ENCODE measurements at regions of chr16 and their contacts with region 1.

Region 1: DNA sequence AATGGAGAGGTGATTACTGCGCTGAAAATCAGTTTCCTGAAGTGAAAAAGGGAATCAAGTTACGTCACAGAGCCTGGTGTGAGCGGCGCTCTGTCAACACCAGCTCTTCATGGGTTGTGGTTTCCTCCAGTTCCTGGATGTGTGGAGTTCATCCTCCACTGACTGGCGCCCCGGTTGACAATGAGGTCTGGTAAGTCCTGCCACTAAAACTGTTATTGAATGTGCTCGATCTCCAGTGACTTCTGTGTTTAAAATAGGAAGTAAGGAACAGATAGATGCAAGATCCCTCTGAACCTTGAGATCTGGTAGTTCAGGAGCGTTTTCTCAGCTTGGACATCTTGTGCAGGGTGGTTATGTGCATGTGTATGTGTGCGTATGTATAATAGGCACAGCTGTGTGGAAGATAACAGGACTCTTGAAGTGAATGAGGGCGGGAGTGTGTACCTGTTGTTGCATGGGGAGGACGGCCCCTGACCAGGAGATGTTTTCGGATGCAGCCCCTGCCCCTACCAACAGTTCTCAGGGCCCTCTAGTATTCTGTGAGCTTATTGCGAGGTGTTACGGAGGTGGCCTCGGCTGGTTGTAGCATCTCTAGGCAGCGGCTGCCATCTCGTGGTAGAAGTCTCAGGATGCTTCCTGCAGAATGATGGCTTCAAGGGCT is 22.0 kb upstream of the GOT2 start:
- DNase-seq: peak; percentile 44 to 82 (median 76)
- ATAC-seq: peak; percentile 94
- H3K4me3 ChIP-seq: peak overlapping the region; percentile 28
- H3K4me3 Mint-ChIP-seq: peak overlapping the region; percentile 56 to 79 (median 70)
- H3K27ac ChIP-seq: peak overlapping the region; percentile 19
- H3K27ac Mint-ChIP-seq: peak overlapping the region; percentile 32 to 94 (median 87)
- H3K4me1 ChIP-seq: peaks cover 0 to 7% of the 10 kb centered on the region in 2 donors
- H3K4me1 Mint-ChIP-seq: peaks cover 7 to 10% (median 9%) of the 10 kb centered on the region in 7 donors
- H3K27me3 ChIP-seq: no peaks in the 10 kb centered on the region
- H3K27me3 Mint-ChIP-seq: peaks cover 0 to 8% (median 0%) of the 10 kb centered on the region in 5 donors

Region 2: GRCh38 chr16:57899771-57900661 is 856.1 kb before region 1 on chr16:
- CTCF ChIA-PET with region 1: no interaction called
- POLR2A ChIA-PET with region 1: no interaction called
- intact Hi-C with region 1: loop called in 1 of 2 experiments (anchors 1 kb)
- DNase-seq: peak; percentile 55 to 81 (median 71)
- ATAC-seq: peak; percentile 86
- H3K4me3 ChIP-seq: no peak overlapping the region
- H3K4me3 Mint-ChIP-seq: no peak overlapping the region
- H3K27ac ChIP-seq: no peak overlapping the region
- H3K27ac Mint-ChIP-seq: peak overlapping the region in 1 of 9 donors; percentile 1
- H3K4me1 ChIP-seq: no peaks in the 10 kb centered on the region
- H3K4me1 Mint-ChIP-seq: peaks cover under 1 to 6% (median 3%) of the 10 kb centered on the region in 7 donors
- H3K27me3 ChIP-seq: no peaks in the 10 kb centered on the region
- H3K27me3 Mint-ChIP-seq: peaks cover 4 to 11% (median 8%) of the 10 kb centered on the region in 5 donors

Region 3: DNA sequence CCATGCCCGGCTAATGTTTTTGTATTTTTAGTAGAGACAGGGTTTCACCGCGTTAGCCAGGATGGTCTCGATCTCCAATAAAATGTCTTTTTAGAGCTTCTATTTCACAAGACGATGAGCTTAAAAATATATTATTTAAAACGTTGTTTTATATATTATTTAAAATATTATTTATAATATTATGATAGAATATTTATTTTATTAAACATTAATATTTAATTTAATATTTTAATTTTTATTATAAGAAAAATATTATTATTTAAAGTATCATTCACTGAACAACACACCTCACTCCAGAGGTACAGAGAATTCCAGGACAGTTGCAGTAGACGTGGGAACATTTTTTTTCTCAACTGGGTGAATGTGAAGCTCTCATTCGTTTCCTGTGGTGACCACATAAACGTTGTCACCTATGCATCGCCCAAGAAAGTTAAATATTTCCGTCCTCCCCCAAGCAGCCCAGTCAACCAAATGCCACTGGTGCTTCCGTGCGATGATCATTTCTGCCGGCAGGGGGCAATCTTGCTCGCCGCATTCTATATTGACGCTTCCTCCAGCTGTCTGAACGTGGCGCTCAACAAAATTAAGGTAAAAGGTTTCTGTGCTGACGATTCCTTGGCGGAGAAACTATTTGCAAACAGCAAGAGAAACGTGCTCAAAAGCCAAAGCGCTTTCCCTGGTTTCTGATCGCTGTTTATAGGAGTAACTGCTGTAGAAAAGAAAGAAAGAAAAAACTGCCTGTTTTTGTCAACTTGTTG is 419.6 kb before region 1 on chr16:
- CTCF ChIA-PET with region 1: interaction called, 48 read pairs
- POLR2A ChIA-PET with region 1: no interaction called
- intact Hi-C with region 1: loop called (anchors 1 kb)
- DNase-seq: peak; percentile 58 to 85 (median 77)
- ATAC-seq: peak; percentile 93
- H3K4me3 ChIP-seq: no peak overlapping the region
- H3K4me3 Mint-ChIP-seq: peak overlapping the region in 8 of 10 donors; percentile 18 to 74 (median 67)
- H3K27ac ChIP-seq: no peak overlapping the region
- H3K27ac Mint-ChIP-seq: no peak overlapping the region
- H3K4me1 ChIP-seq: no peaks in the 10 kb centered on the region
- H3K4me1 Mint-ChIP-seq: peaks cover 0 to 8% (median 5%) of the 10 kb centered on the region in 7 donors
- H3K27me3 ChIP-seq: no peaks in the 10 kb centered on the region
- H3K27me3 Mint-ChIP-seq: peaks cover 0 to 12% (median 5%) of the 10 kb centered on the region in 5 donors

Region 4: DNA sequence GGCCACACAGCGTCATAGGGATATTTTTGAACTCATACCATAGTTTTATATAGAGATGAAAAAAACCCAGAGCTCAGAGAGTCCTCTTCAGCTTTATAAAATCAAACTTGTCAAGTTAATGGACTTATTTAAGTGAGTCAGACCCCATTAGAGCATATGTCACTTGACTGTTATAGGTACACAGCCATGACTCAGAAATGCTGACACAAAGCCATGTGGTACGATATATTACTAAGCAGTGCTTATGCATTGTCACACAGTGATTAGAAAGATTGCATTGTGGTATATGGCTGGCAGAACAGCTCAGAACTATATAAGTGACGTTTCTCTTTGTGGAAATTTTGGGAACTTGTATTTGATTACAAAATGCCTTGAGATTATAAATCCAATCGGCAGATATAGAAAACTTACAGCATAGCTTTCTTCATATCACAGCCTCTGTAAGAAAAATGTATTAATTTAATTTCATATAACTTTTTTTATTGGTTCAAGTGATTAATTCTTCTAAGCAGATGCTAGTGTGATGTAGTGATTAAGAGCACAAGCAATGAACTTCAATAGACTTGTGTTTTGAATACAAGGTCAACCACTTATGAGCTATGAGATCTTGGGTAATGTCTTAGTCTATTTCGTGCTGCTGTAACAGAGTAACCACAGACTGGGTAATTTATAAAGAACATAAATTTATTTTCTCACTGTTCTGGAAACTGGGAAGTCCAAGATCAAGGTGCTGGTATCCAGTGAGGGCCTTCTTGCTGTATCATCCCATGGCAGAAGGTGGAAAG is 389.7 kb before region 1 on chr16:
- CTCF ChIA-PET with region 1: no interaction called
- POLR2A ChIA-PET with region 1: no interaction called
- intact Hi-C with region 1: no loop called
- DNase-seq: no peak
- ATAC-seq: no peak
- H3K4me3 ChIP-seq: no peak overlapping the region
- H3K4me3 Mint-ChIP-seq: no peak overlapping the region
- H3K27ac ChIP-seq: no peak overlapping the region
- H3K27ac Mint-ChIP-seq: no peak overlapping the region
- H3K4me1 ChIP-seq: no peaks in the 10 kb centered on the region
- H3K4me1 Mint-ChIP-seq: no peaks in the 10 kb centered on the region
- H3K27me3 ChIP-seq: no peaks in the 10 kb centered on the region
- H3K27me3 Mint-ChIP-seq: peaks cover 24 to 61% (median 53%) of the 10 kb centered on the region in 5 donors

Region 5: GRCh38 chr16:58487566-58488351 is 268.4 kb before region 1 on chr16:
- CTCF ChIA-PET with region 1: interaction called, 4 read pairs
- POLR2A ChIA-PET with region 1: no interaction called
- intact Hi-C with region 1: loop called (anchors 1 kb)
- DNase-seq: peak; percentile 44 to 76 (median 65)
- ATAC-seq: peak; percentile 88
- H3K4me3 ChIP-seq: no peak overlapping the region
- H3K4me3 Mint-ChIP-seq: peak overlapping the region in 4 of 10 donors; percentile 16 to 42 (median 32)
- H3K27ac ChIP-seq: no peak overlapping the region
- H3K27ac Mint-ChIP-seq: no peak overlapping the region
- H3K4me1 ChIP-seq: no peaks in the 10 kb centered on the region
- H3K4me1 Mint-ChIP-seq: peaks cover 0 to 3% (median 0%) of the 10 kb centered on the region in 7 donors
- H3K27me3 ChIP-seq: no peaks in the 10 kb centered on the region
- H3K27me3 Mint-ChIP-seq: peaks cover 0 to 15% (median 9%) of the 10 kb centered on the region in 5 donors

Region 6: DNA sequence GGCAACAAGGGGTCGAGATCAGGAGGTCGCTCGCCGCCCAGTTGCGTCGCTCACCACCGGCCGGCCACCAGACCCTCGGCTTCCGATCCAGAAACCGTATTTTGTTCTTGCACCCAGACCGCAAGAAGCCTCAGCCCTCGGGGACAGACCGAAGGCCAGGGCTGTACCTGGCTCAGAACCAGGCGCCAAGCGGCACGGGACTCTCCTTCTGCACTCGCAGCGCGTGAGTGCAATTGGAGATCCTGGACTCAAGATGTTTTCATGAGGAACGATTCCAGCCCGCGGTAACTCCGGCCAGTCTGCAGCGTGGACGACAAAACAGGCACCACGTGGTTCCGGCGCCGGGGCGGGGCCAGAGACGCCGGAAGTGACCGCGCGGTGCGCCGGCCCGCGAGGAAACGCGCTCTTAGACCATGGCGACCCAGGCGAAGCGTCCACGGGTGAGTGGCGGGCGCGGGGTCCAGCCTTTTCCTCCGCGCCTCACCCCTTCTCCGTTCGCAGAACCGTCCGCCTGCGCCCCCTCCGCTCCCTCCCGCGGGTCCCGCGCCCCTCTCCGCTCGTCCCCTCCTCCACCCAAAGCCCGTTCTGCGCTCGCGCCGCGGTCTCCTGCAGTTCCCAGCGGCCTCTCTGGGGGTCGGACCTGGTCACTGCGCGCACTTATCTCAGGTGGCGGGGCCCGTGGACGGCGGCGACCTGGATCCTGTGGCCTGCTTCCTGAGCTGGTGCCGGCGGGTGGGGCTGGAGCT is 240.8 kb before region 1 on chr16 and contains the start of gene SETD6:
- CTCF ChIA-PET with region 1: interaction called, 47 read pairs
- POLR2A ChIA-PET with region 1: interaction called, 9 read pairs
- intact Hi-C with region 1: loop called (anchors 1 kb)
- DNase-seq: peak; percentile 49 to 89 (median 61)
- ATAC-seq: peak; percentile 85
- H3K4me3 ChIP-seq: peak within 1 kb of the TSS; percentile 82
- H3K4me3 Mint-ChIP-seq: peak within 1 kb of the TSS; percentile 78 to 95 (median 88)
- H3K27ac ChIP-seq: peak within 1 kb of the TSS; percentile 81
- H3K27ac Mint-ChIP-seq: peak within 1 kb of the TSS; percentile 69 to 95 (median 87)
- H3K4me1 ChIP-seq: peaks cover 7 to 10% of the 10 kb centered on the region in 2 donors
- H3K4me1 Mint-ChIP-seq: peaks cover 9 to 40% (median 26%) of the 10 kb centered on the region in 7 donors
- H3K27me3 ChIP-seq: no peaks in the 10 kb centered on the region
- H3K27me3 Mint-ChIP-seq: no peaks in the 10 kb centered on the region
- total RNA-seq, gene SETD6: 20.7 to 41.3 (median 39.0) TPM

Region 7: DNA sequence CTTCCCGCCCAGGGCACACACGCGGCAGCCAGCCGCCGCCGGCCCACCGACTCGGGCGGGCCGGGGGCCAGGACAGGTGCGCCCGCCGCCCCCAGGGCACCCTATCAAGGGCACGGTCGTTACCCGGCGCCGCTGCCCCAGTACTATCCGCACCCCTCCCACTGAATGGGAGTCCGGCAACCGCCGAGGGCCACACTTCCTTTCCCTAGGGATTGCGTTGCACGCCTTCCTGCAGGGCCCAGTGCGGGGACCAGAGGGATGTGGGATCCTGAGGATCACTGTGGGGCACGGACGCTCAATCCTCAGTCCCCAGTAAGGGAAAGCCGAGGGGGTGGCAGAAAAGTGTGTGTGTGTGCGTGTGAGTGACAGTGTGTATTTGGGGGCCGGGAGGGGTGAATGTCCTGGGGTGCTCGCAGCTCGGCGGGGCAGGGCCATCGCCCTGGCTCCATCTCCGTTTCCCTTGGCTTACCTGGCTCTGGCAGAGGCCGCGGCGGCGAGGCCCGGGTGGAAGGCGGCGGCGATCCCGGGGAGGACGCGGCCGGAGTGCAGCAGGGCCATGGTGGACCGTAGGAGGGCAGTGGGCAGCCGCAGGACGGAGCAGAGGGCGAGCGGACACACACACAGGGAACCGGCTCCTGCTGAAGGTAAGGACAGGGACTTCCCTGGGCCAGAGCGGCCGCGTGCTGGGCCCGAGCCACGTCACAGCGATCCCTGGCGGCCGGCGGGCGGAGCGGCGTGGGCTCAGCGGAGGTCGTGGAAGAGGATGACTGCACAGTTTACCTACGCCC is 22.3 kb before region 1 on chr16 and contains the start of gene GOT2:
- CTCF ChIA-PET with region 1: interaction called, 9 read pairs
- POLR2A ChIA-PET with region 1: interaction called, 6 read pairs
- intact Hi-C with region 1: loop called in 1 of 2 experiments (anchors 1 kb)
- DNase-seq: peak; percentile 61 to 87 (median 77)
- ATAC-seq: peak; percentile 99
- H3K4me3 ChIP-seq: peak within 1 kb of the TSS; percentile 83
- H3K4me3 Mint-ChIP-seq: peak within 1 kb of the TSS; percentile 93 to 99 (median 98)
- H3K27ac ChIP-seq: peak within 1 kb of the TSS; percentile 79
- H3K27ac Mint-ChIP-seq: peak within 1 kb of the TSS; percentile 31 to 95 (median 91)
- H3K4me1 ChIP-seq: peaks cover 9 to 15% of the 10 kb centered on the region in 2 donors
- H3K4me1 Mint-ChIP-seq: peaks cover 16 to 50% (median 42%) of the 10 kb centered on the region in 7 donors
- H3K27me3 ChIP-seq: no peaks in the 10 kb centered on the region
- H3K27me3 Mint-ChIP-seq: peaks cover 0 to 3% (median 0%) of the 10 kb centered on the region in 5 donors
- total RNA-seq, gene GOT2: 24.3 to 76.6 (median 38.0) TPM